Activated T-helper 2 cell treated with anti-CD3 and anti-CD28 coated beads, Interferon-gamma antibody, Interleukin-2, Interleukin-4, amounts not matched to agents 10 μg/mL and 5 μg/mL and 100 μg/mL, durations not matched to agents 14 hours and 24 hours and 36 hours (primary cell): ENCODE measurements at regions of chr6 and their contacts with region 1.

Region 1: GRCh38 chr6:11208267-11208666 is 24.2 kb downstream of the NEDD9 start:
- DNase-seq: no peak
- H3K4me3 Mint-ChIP-seq: no peak overlapping the region
- H3K27ac Mint-ChIP-seq: peak overlapping the region; percentile 43
- H3K4me1 Mint-ChIP-seq: peaks cover 42% of the 10 kb centered on the region
- H3K27me3 Mint-ChIP-seq: no peaks in the 10 kb centered on the region

Region 2: DNA sequence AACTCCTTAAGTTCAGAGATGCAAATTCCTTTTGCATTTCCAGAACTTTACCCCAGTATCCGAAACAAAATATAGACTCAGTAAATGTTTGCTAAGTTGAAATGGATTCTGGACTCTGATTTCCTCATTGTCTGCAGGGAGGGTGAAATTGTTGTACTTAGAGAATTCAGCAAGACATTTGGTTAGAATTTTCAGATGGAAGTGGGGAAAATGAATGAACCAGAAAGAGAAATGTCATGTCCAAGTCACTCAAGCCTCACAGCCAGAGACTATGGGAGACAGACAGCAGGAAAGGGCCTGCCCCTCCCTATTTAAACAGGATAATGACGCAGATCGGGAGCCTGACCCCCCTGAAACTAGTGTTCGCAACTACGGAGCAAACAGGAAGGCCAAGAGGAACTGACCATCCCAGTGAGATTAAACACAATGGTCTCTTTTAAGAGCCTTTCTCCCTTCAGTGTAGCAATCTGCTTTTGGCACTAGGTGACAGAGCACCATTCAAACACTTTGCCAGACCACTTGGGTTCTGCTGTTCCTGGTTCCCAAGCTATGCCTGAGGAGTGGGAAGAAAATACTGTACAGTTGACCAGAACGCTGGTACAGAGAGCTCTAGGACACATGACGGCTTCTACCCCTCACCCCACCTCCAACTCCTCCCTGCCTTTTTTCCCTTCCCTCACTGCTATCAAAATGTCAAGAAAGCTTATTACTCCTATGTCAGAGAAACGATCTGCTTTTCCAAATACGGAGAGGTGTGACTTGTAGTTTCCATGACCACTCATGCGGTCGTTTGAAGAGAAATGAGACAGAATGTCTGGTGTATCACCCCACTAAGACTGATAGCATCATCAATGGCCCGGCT is 10.5 kb after region 1 on chr6:
- intact Hi-C with region 1: loop called (anchors 1 kb)
- DNase-seq: no peak
- H3K4me3 Mint-ChIP-seq: no peak overlapping the region
- H3K27ac Mint-ChIP-seq: peak overlapping the region; percentile 38
- H3K4me1 Mint-ChIP-seq: peaks cover 75% of the 10 kb centered on the region
- H3K27me3 Mint-ChIP-seq: no peaks in the 10 kb centered on the region